ENCODE measurements at regions of chr19 and their contacts with region 1.

Region 1: DNA sequence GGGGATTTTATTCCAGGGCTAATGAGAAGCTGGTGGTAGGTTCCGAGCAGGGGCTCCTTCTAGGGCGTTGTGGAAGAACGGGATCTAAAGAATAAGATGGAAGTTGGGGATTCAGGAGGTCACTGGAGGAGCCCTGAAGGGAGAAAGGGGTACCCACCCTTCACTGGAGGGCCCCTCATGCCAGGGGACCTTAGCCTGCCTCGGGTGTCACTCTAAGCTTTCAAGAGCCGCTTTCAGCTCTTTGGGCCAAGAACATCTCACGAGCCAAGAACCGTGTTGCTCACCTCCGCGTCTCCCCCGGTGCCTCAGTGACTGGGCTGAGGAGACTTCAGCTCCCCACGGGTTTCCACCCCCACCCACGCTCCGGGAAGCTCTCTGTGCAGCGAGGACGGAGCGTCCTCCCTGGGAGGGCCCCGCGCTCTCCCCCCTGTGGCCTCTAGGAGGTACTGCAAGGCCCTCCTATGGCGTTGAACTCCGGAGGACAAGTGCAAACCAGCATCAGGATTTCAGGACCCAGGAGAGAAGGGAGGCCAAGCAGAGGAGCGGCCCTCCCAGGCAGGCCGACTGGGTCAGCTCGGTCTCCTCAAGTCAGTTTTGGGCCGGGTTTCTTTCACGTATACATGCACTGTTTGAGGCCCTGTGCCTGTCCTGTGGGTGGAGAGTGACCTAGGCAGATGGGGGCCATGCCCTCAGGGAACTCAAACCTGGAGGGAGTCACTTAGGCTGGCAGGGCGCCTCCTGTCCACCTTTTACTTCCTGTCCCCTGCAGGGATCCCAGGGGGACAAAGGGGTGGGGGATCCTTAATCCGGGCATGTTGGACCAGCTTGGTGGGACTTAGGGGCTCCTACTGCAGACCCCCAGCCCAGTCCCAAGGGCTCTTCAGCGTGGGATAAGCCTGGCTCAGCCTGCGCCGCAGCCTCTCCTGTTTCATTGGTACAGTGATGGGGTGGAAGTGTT is 5.1 kb upstream of the KRTDAP start:
- DNase-seq: peak; percentile 67
- H3K4me3 Mint-ChIP-seq: no peak overlapping the region
- H3K27ac Mint-ChIP-seq: no peak overlapping the region
- H3K4me1 Mint-ChIP-seq: peaks cover 1% of the 10 kb centered on the region
- H3K27me3 Mint-ChIP-seq: peaks cover 29% of the 10 kb centered on the region

Region 2: GRCh38 chr19:35357867-35358573 is 137.4 kb before region 1 on chr19 and contains the start of gene FFAR3:
- CTCF ChIA-PET with region 1: interaction called, 25 read pairs
- POLR2A ChIA-PET with region 1: interaction called, 3 read pairs
- DNase-seq: no peak
- H3K4me3 Mint-ChIP-seq: peak within 1 kb of the TSS; percentile 20
- H3K27ac Mint-ChIP-seq: peak within 1 kb of the TSS; percentile 0
- H3K4me1 Mint-ChIP-seq: peaks cover 14% of the 10 kb centered on the region
- H3K27me3 Mint-ChIP-seq: peaks cover 17% of the 10 kb centered on the region
- total RNA-seq, gene FFAR3: 0.63 to 0.78 TPM